ENCODE measurements at regions of chr19 and their contacts with region 1.

Region 1: DNA sequence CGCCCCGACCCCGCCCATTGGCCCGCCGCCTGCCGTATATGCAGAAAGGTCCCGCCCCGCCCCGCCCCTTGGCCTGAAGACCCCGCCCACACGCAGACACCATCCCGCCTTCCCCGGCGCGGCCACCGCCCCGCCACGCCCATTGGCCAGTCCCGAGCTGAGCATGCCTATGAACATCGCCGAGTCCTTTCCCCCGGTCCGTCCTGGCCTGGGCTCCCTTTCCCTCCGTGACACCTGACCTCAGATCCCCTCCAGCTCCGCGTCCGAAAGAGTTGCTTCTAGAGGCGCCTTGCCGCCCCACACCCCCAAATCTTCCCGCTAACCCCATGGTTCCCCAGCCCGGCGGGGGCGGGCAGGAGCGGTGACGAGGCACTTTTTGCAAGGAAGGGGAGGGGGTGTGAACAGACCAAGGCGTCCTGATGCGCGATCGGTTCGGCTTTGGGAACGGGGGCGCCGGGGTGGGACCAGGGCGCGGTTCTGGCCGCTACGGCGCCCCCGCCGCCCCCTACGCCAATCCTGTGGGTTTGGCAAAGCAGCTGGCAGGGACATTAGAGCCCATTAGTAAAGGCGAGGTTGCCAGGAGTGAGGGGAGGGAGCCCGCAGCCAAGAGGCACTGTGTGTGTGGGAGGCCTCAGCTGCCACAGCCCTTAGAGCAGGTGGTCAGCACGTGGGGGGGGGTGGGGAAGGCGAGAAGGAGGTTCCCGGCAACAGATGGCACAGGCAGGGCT is 406 bp upstream of the NUMBL start:
- DNase-seq: peak; percentile 91
- H3K4me3 ChIP-seq: peak overlapping the region; percentile 42 to 73 (median 62)
- H3K27ac ChIP-seq: peak overlapping the region; percentile 91
- H3K4me1 ChIP-seq: peaks cover 13% of the 10 kb centered on the region
- H3K27me3 ChIP-seq: no peaks in the 10 kb centered on the region
- CTCF ChIP-seq: no peak
- POLR2A ChIP-seq: peak; percentile 36

Region 2: GRCh38 chr19:40716655-40717324 is 25.9 kb after region 1 on chr19 and contains the starts of genes COQ8B and ITPKC:
- CTCF ChIA-PET with region 1: interaction called, 3 read pairs
- POLR2A ChIA-PET with region 1: interaction called, 5 read pairs
- dilution Hi-C with region 1: no loop called
- intact Hi-C with region 1: loop called (anchors 1 kb)
- DNase-seq: peak; percentile 97
- H3K4me3 ChIP-seq: peak within 1 kb of the TSS; percentile 39 to 78 (median 53)
- H3K27ac ChIP-seq: peak within 1 kb of the TSS; percentile 94
- H3K4me1 ChIP-seq: peaks cover 52% of the 10 kb centered on the region
- H3K27me3 ChIP-seq: no peaks in the 10 kb centered on the region
- CTCF ChIP-seq: no peak
- POLR2A ChIP-seq: peak; percentile 62
- total RNA-seq, gene COQ8B: 15.3 and 19.2 TPM in 2 replicates
- total RNA-seq, gene ITPKC: 16.1 and 16.9 TPM in 2 replicates

Region 3: DNA sequence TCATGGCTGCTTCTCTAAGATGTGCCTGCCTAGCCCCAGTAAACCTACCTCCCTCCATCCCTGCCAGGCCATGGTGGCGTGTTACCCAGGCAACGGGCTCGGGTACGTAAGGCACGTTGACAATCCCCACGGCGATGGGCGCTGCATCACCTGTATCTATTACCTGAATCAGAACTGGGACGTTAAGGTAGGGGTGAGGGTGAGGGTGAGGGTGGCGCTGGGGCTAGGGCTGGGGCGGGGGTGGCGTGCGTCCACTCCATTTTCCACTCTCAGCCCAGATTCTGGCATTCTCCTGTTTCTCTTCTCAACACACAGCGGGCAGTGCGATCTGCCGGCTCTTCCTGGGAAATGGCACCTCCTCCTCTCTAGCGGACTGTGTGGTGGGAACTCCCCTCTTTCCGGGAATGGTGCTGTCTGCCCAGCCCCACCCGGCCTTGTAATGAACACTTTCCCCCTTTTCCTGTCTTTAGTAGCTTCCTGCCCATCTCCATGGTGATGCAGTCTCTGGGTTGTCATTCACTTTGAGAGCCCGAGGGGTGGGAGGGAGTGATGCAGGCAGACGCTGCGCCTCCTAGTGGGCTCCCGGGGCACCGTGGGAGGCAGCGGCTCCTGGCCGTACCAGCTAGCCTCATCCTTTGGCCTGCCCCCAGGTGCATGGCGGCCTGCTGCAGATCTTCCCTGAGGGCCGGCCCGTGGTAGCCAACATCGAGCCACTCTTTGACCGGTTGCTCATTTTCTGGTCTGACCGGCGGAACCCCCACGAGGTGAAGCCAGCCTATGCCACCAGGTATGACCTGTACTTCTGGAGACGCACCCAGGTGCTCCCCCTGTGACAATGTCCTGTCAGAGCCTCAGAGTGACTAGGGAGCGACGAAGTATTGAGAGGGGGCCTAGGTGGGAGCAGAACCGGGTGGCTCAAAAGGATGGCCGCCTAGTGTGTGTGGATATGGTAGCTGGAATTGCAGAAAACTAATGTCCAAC is 115.9 kb after region 1 on chr19:
- CTCF ChIA-PET with region 1: interaction called, 5 read pairs
- POLR2A ChIA-PET with region 1: no interaction called
- dilution Hi-C with region 1: no loop called
- intact Hi-C with region 1: loop called (anchors 1 kb)
- DNase-seq: peak; percentile 99
- H3K4me3 ChIP-seq: peak overlapping the region in 1 of 3 experiments; percentile 9
- H3K27ac ChIP-seq: peak overlapping the region; percentile 35
- H3K4me1 ChIP-seq: peaks cover 63% of the 10 kb centered on the region
- H3K27me3 ChIP-seq: peaks cover 0 to under 1% of the 10 kb centered on the region in 2 experiments
- CTCF ChIP-seq: peak; percentile 99
- POLR2A ChIP-seq: peak; percentile 29

Region 4: GRCh38 chr19:41083516-41083915 is 392.7 kb after region 1 on chr19:
- CTCF ChIA-PET with region 1: no interaction called
- POLR2A ChIA-PET with region 1: no interaction called
- dilution Hi-C with region 1: no loop called
- intact Hi-C with region 1: no loop called
- DNase-seq: no peak
- H3K4me3 ChIP-seq: no peak overlapping the region
- H3K27ac ChIP-seq: no peak overlapping the region
- H3K4me1 ChIP-seq: no peaks in the 10 kb centered on the region
- H3K27me3 ChIP-seq: peaks cover 0 to 1% of the 10 kb centered on the region in 2 experiments
- CTCF ChIP-seq: no peak
- POLR2A ChIP-seq: no peak

Measured in endothelial cell of umbilical vein (primary cell).